ENCODE measurements at regions of chr5 and their contacts with region 1.

Region 1: GRCh38 chr5:177311723-177312648 is at the start of gene MXD3:
- DNase-seq: peak; percentile 98
- H3K4me3 Mint-ChIP-seq: peak within 1 kb of the TSS; percentile 78
- H3K27ac Mint-ChIP-seq: peak within 1 kb of the TSS; percentile 88
- H3K4me1 Mint-ChIP-seq: peaks cover 22% of the 10 kb centered on the region
- H3K27me3 Mint-ChIP-seq: peaks cover 1% of the 10 kb centered on the region
- total RNA-seq, gene MXD3: 31.2 to 33.4 TPM

Region 2: DNA sequence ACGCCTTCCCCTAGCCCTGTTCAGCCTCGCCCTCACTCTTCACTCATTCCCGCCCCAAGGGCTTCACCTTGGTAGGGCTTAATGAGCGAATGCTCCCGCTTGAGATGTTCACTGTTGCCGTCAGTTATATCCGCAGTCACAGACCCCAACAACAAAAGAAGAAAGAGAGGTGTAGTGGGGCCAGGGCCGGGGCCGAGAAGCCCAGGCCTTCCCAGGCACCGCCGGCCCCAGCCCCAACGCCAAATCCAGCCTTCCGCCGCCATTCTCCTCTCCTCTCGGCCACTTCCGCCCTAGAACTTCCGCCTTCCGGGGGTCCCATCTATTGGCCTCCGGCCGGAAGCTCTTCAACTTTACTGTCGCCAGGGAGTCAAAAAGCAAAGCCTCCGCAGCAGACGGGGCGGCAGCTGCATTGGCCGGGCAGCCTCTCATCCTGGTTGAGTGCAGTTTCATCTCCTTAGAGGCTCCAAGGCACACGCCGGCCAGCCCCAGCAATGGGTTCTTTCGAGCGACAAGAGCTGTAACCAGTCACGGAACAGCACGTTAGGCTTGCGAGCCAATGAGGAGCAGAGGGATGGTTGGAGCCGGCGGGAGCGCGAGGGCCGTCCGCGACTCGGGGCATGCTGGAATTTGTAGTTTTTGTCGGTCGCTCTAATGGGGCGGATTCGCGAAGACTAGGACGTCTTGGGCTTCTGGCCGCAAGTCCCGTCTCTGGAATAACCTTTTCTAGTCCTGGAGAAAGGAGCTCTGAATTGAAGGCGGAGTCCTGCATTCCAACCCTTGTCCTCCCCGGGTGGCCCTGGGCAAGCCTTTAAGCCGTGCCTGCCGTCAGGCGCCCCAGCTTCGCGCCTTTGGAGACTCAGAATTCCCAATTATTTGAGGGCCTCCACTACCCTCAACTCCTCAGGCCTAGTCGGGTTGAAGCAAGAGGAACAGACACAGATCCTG is 39.7 kb after region 1 on chr5 and contains the start of gene LMAN2:
- CTCF ChIA-PET with region 1: interaction called, 17 read pairs
- POLR2A ChIA-PET with region 1: interaction called, 11 read pairs
- intact Hi-C with region 1: loop called (anchors 2 kb)
- DNase-seq: peak; percentile 95
- H3K4me3 Mint-ChIP-seq: peak within 1 kb of the TSS; percentile 96
- H3K27ac Mint-ChIP-seq: peak within 1 kb of the TSS; percentile 99
- H3K4me1 Mint-ChIP-seq: peaks cover 64% of the 10 kb centered on the region
- H3K27me3 Mint-ChIP-seq: no peaks in the 10 kb centered on the region
- total RNA-seq, gene LMAN2: 98.3 to 104 TPM

Region 3: GRCh38 chr5:177425801-177426565 is 114.0 kb after region 1 on chr5:
- CTCF ChIA-PET with region 1: interaction called, 11 read pairs
- POLR2A ChIA-PET with region 1: interaction called, 4 read pairs
- intact Hi-C with region 1: loop called (anchors 1 kb)
- DNase-seq: peak; percentile 100
- H3K4me3 Mint-ChIP-seq: peak overlapping the region; percentile 87
- H3K27ac Mint-ChIP-seq: peak overlapping the region; percentile 94
- H3K4me1 Mint-ChIP-seq: peaks cover 35% of the 10 kb centered on the region
- H3K27me3 Mint-ChIP-seq: no peaks in the 10 kb centered on the region

Region 4: DNA sequence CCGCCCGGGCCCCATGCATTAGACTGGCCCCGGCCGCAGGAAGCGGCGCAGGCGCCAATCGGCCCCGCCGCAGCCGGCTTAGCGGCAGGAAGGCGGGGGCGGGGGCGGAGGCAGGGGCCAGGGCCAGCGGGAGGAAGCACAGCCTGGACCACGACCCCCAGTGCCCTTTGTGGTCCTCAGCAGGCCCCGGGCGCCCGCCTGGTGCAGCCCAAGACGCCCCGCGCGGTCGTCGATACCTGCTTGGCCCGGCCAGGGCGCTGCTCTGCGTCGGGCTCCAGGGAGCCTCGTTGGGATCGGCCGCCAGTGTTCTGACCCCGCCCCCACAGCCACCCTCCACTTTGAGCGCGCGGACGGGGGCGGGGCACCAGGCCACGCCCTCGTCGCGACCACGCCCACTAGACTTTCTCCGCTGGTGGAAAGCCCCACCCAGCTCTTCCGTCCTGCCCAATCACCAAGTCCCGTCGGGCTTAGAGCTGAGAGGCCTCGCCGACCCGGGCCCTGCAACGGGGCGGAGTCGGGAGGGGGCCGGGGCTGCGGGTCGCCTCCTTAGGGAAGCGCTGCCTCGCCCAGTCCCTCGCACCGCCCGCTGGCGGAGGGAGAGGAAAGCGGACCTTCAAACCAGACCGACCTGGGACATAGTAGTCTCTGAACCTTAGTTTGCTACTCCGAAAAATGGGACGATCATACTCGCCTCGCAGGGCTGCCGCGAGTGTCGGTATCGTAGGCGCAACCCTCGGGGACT is 185.5 kb after region 1 on chr5 and contains the start of gene PDLIM7:
- CTCF ChIA-PET with region 1: interaction called, 32 read pairs
- POLR2A ChIA-PET with region 1: interaction called, 3 read pairs
- intact Hi-C with region 1: loop called (anchors 2 kb)
- DNase-seq: peak; percentile 96
- H3K4me3 Mint-ChIP-seq: peak within 1 kb of the TSS; percentile 82
- H3K27ac Mint-ChIP-seq: peak within 1 kb of the TSS; percentile 23
- H3K4me1 Mint-ChIP-seq: peaks cover 27% of the 10 kb centered on the region
- H3K27me3 Mint-ChIP-seq: peaks cover 8% of the 10 kb centered on the region
- total RNA-seq, gene PDLIM7: 50.2 to 56.6 TPM

Measured in activated CD4-positive, alpha-beta memory T cell treated with anti-CD3 and anti-CD28 coated beads for 36 hours (primary cell).